ENCODE measurements at regions of chr6 and their contacts with region 1.

Region 1: GRCh38 chr6:42777126-42777822 is 4.6 kb upstream of the BICRAL start:
- DNase-seq: no peak
- ATAC-seq: peak; percentile 15
- H3K4me3 Mint-ChIP-seq: peak overlapping the region; percentile 54
- H3K27ac Mint-ChIP-seq: peak overlapping the region; percentile 90
- H3K4me1 Mint-ChIP-seq: peaks cover 76% of the 10 kb centered on the region
- H3K27me3 Mint-ChIP-seq: no peaks in the 10 kb centered on the region
- CTCF ChIP-seq: no peak

Region 2: GRCh38 chr6:42764911-42765648 is 12.2 kb before region 1 on chr6:
- CTCF ChIA-PET with region 1: no interaction called
- POLR2A ChIA-PET with region 1: interaction called, 389 read pairs
- intact Hi-C with region 1: no loop called
- DNase-seq: no peak
- ATAC-seq: no peak
- H3K4me3 Mint-ChIP-seq: no peak overlapping the region
- H3K27ac Mint-ChIP-seq: no peak overlapping the region
- H3K4me1 Mint-ChIP-seq: peaks cover 3% of the 10 kb centered on the region
- H3K27me3 Mint-ChIP-seq: no peaks in the 10 kb centered on the region
- CTCF ChIP-seq: no peak

Measured in activated B cell treated with CpG ODN at 0.5 μM for 24 hours (primary cell).